ENCODE measurements at regions of chr6 and their contacts with region 1.

Region 1: GRCh38 chr6:3251462-3252314 is 7.1 kb upstream of the PSMG4 start:
- DNase-seq: no peak
- H3K4me3 ChIP-seq: no peak overlapping the region
- CTCF ChIP-seq: peak; percentile 96

Region 2: GRCh38 chr6:3039384-3039783 is 212.3 kb before region 1 on chr6:
- CTCF ChIA-PET with region 1: no interaction called
- POLR2A ChIA-PET with region 1: no interaction called
- DNase-seq: no peak
- H3K4me3 ChIP-seq: no peak overlapping the region
- CTCF ChIP-seq: no peak

Region 3: GRCh38 chr6:3118353-3119039 is 133.2 kb before region 1 on chr6 and contains the start of gene BPHL:
- CTCF ChIA-PET with region 1: interaction called, 89 read pairs
- POLR2A ChIA-PET with region 1: no interaction called
- DNase-seq: peak; percentile 41
- H3K4me3 ChIP-seq: peak within 1 kb of the TSS; percentile 96
- CTCF ChIP-seq: no peak

Region 4: GRCh38 chr6:3139090-3139903 is 112.4 kb before region 1 on chr6:
- CTCF ChIA-PET with region 1: interaction called, 34 read pairs
- POLR2A ChIA-PET with region 1: no interaction called
- DNase-seq: no peak
- H3K4me3 ChIP-seq: no peak overlapping the region
- CTCF ChIP-seq: no peak

Region 5: GRCh38 chr6:3162565-3163247 is 89.0 kb before region 1 on chr6:
- CTCF ChIA-PET with region 1: interaction called, 86 read pairs
- POLR2A ChIA-PET with region 1: interaction called, 42 read pairs
- DNase-seq: no peak
- H3K4me3 ChIP-seq: peak overlapping the region; percentile 67
- CTCF ChIP-seq: peak; percentile 32

Region 6: DNA sequence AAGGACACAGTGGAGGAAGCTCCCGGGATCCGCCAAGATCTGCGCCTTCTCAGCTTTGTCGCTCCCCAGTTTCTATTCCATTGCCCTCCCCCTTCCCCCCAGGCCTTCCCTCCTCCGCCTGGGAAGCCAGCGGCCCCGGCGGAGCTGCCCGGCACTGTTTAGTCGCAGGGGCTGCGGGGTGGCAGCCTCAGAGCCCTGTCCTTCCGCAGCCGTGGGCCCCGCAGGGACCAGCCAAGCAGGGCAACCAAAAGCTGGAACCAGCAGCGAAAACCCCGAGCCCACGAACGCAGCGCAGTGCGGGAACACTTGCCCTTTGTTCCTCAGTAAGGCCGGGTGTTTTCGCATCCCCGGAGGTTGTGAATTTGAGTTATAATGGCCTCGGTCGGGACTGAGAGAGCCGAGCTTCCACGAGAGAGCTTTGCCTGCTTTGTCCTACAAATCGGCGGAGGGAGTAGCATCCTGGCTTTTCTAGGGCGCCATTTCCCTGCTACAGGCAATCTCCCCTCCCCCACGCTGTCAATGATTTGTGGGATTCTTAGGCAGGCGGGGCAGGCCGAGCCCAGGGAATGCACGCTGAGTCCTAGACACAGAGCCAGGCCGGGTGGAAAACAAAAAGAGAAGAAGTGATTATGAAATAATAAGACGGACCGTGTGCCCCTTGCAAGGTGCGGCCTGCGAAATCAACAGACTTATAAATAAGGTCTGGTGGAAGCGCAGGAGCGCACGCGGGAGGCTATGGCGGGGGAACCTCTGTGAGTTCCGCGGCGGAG is 20.3 kb before region 1 on chr6:
- CTCF ChIA-PET with region 1: interaction called, 81 read pairs
- POLR2A ChIA-PET with region 1: interaction called, 4 read pairs
- DNase-seq: no peak
- H3K4me3 ChIP-seq: peak overlapping the region; percentile 64
- CTCF ChIP-seq: no peak

Region 7: GRCh38 chr6:3273707-3274521 is 22.2 kb after region 1 on chr6:
- CTCF ChIA-PET with region 1: interaction called, 24 read pairs
- POLR2A ChIA-PET with region 1: interaction called, 3 read pairs
- DNase-seq: no peak
- H3K4me3 ChIP-seq: no peak overlapping the region
- CTCF ChIP-seq: no peak

Region 8: DNA sequence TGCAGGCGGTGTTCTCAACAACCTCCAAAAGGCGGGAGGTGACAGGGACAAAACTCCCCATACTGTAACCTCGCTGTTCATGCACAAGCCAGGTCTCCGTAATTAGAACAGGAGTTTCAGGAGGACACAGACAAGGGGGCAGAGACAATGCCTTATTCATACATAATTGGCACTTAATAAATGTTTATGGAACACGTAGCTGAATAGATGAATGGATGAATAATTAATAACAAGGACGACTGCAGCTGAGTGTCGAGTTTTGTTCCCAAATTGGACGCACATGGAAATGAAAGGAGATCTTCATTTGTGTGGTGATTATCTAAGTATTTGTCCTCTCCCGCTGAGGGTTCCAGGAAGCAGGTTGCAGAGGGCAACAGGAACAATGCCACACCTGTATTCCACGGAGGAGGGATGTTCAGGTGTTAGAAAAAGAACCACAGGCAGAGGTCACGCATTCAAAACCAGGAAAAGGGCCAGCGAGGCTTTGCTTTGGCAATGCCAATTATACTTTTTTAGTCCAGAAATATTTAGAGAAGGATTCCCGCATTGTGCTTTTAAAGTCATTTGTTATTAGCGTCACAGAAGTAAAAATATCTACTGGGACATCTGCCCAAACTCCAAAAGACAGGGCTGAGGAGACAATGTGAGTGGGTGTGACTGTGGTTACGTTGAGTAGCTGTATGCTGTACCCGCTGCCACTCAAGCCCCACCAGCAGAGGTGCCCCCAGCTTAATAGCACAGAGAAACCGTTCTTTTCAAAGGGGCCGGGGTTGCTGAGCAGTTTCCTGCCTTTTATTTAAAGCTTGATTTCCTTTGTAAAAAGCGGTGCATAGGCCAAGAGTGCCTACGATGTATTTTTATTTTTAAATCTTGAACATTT is 376.5 kb after region 1 on chr6:
- CTCF ChIA-PET with region 1: no interaction called
- POLR2A ChIA-PET with region 1: no interaction called
- DNase-seq: no peak
- H3K4me3 ChIP-seq: no peak overlapping the region
- CTCF ChIP-seq: no peak